OCI-LY7 (cell line): ENCODE measurements at regions of chr10 and their contacts with region 1.

Region 1: DNA sequence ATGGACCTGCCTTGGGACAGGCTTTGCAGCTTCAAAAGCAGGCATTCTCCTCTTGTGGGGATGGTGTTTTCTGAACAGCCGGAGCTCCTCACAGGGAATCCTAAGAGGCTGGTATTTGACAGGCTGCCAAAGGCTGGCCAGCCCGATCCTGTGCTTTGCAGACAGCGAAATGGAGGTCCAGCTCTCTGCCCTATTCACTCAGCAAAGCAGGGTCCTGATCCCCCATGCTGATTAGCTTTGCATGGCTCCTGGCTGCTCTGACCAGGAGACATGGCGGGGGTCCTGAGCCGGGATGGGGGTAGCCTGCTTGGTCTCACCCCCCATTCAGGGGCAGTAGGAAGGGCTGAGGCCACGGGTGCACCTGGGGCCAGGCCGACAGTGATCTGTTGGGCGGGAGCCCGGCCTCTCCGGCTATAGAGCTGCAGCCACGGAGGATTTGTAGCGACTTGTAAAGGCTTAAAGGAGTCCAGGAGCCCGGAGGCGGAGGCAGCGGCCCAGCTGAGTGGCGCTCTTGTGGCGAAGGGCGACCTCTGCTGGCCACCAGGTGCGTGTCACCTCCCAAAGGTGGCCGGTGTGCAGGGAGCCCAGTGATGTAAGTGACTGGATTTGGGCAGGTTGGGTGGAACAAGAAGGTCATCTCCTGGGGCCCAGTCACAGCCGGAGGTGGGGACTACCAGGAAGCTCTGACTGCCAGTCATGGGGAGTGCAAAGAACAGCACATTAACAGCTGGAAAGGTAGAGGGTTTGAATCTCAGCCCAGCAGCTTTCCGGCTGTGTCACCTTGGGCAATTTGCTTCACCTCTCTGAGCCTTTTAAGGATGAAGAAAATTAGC is 126.5 kb downstream of the ZMIZ1 start:
- DNase-seq: peak; percentile 81
- H3K4me3 ChIP-seq: no peak overlapping the region
- H3K27ac ChIP-seq: no peak overlapping the region
- H3K4me1 ChIP-seq: peaks cover 44% of the 10 kb centered on the region
- CTCF ChIP-seq: peak; percentile 94

Region 2: DNA sequence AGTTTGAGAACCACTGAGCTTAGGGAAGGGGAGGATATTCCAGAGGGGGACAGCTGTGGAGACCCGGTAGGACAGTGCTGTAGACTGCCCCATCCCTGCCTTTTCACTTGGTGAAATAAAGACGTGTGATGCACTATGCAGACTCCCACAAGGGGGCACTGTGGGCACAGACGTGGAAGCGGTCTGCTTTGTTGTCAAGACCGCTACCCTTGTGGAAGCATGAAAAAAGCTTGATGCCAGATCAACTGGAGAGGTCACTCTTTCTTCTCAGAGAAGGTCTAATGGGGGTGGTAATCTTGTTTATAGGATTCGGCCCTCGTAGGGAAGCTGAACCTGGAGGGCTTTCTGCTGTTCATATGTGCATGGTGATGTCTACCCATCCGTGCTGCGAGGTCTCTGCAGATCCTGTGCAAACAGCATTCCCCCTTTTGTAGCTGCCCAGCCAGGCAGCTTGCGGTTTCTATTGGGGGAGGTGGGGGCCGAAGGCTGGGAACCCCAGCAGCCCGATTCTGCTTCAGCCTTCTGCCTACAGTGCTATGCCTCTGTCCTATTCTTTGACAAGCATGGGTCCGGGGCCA is 1147.9 kb before region 1 on chr10:
- CTCF ChIA-PET with region 1: no interaction called
- POLR2A ChIA-PET with region 1: interaction called, 4 read pairs
- intact Hi-C with region 1: loop called (anchors 1 kb)
- DNase-seq: peak; percentile 86
- H3K4me3 ChIP-seq: no peak overlapping the region
- H3K27ac ChIP-seq: no peak overlapping the region
- H3K4me1 ChIP-seq: peaks cover 27% of the 10 kb centered on the region
- CTCF ChIP-seq: peak; percentile 88

Region 3: DNA sequence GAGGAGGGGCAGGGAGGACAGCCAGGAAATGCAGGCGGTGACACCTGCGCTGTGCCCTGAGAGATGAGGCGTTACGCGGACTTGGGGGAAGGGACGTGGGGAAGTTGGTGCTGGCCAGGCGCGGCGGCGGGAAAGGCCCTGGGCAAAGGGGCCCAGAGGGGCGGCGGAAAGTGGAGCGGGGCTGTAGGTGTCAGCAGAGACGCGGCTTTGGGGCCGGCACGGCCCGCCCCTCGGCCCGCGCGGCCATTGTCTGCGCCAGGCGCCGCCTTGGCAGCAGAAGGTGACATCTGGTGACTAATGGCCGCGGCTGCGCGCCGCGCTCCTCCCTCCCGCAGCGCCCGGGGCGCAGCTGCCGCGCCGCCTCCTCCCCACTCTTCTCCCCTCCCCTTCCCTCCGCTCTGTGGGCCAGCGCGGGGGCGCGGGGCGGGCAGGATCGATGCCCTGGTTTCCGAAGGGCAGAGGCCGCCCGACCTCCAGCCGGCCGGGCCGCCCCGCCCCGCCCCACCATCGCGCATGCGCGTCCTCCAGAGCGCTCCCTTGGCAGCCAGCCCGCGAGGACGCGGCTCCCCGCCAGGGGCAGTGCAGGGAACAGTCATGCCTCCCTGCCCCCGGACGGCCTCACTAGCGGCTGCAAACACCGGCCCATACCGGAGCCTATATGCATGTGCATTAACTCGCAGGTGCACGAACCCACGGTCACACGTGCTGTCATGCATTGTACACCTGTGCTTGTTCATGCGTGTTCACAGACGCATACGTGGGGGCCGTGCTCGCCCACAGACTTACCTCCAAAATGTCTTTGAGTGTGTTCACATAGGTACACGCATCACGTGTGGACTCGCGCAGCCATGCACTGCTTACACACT is 892.1 kb before region 1 on chr10:
- CTCF ChIA-PET with region 1: no interaction called
- POLR2A ChIA-PET with region 1: no interaction called
- intact Hi-C with region 1: loop called (anchors 5 kb)
- DNase-seq: peak; percentile 92
- H3K4me3 ChIP-seq: peak overlapping the region; percentile 68
- H3K27ac ChIP-seq: peak overlapping the region; percentile 40
- H3K4me1 ChIP-seq: peaks cover 26% of the 10 kb centered on the region
- CTCF ChIP-seq: peak; percentile 72

Region 4: GRCh38 chr10:78658645-78659597 is 536.4 kb before region 1 on chr10:
- CTCF ChIA-PET with region 1: no interaction called
- POLR2A ChIA-PET with region 1: no interaction called
- intact Hi-C with region 1: loop called (anchors 1 kb)
- DNase-seq: peak; percentile 93
- H3K4me3 ChIP-seq: peak overlapping the region; percentile 54
- H3K27ac ChIP-seq: peak overlapping the region; percentile 90
- H3K4me1 ChIP-seq: peaks cover 28% of the 10 kb centered on the region
- CTCF ChIP-seq: no peak

Region 5: DNA sequence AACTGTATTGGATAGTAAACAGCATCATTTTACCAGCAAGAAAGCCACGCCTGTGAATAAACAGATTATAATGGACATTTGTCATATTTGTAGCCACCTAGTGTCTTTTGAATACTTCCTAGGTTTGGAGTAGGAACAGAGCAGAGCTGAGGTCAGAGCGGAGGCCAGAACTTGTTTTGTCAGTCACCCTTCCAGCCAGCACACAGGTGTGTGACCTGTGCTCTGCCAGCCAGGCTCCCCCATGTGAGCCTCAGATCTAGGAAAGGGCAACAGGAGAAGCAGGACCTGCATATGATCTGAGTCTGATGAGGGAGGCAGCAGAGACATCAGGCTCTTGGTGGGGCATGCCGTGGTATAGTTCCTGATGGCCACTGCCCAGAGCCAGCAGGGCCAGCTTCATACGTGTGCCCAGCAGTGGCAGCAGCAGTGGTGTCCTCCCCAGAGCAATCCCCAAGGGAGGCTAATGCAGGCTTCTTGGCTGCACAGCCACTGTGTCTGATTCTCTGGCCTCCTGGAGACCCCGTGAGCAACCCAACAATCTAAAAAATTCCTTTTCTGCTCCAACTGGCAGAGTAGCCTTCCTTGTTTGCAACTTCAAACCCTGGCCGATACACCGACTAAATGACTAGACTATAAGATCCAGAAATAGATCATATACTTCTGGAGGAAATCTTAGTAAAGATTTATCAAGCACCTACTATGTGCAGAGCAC is 357.2 kb before region 1 on chr10:
- CTCF ChIA-PET with region 1: no interaction called
- POLR2A ChIA-PET with region 1: no interaction called
- intact Hi-C with region 1: loop called (anchors 5 kb)
- DNase-seq: no peak
- H3K4me3 ChIP-seq: no peak overlapping the region
- H3K27ac ChIP-seq: no peak overlapping the region
- H3K4me1 ChIP-seq: no peaks in the 10 kb centered on the region
- CTCF ChIP-seq: no peak

Region 6: GRCh38 chr10:79068562-79069324 is 126.6 kb before region 1 on chr10 and contains the start of gene ZMIZ1:
- CTCF ChIA-PET with region 1: interaction called, 4 read pairs
- POLR2A ChIA-PET with region 1: no interaction called
- intact Hi-C with region 1: loop called (anchors 1 kb)
- DNase-seq: peak; percentile 93
- H3K4me3 ChIP-seq: peak within 1 kb of the TSS; percentile 89
- H3K27ac ChIP-seq: peak within 1 kb of the TSS; percentile 60
- H3K4me1 ChIP-seq: peaks cover 27% of the 10 kb centered on the region
- CTCF ChIP-seq: peak; percentile 47
- total RNA-seq, gene ZMIZ1: 18.9 and 20.4 TPM in 2 replicates